Dendritic cell treated with granulocyte-macrophage colony-stimulating factor and Interleukin-4, amounts not matched to agents 40 ng/mL and 50 ng/mL, for 4 days (primary cell): ENCODE measurements at regions of chr13 and their contacts with region 1.

Region 1: DNA sequence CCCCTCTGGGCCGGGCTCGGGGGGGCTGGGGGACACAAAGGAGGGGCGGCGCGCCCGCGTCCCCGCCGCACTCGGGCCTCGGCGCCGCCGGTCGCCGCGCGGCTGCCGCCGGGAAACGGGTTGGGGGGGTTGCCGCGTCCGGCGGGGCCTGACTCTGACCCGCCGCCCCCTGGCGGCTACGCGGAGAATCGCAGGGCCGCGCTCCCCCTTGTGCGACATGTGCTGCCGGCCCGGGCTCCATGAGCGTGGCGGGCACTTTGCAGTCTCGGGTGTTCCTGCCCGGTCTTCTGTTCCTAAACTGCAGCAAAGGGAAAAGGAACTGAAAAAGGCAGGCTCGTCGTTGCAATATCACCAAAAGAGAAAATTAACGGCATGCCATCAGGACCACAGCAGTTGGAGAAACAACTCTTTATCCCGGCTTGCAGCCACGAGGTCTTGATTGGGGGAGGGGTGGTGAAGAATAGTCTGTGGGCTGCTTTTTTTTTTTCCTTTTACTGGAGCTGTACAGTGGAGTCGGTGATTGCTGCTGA is 1.5 kb downstream of the MIR17HG start:
- H3K4me3 Mint-ChIP-seq: peak overlapping the region; percentile 74
- H3K27ac Mint-ChIP-seq: peak overlapping the region; percentile 77
- H3K4me1 Mint-ChIP-seq: peaks cover 20% of the 10 kb centered on the region
- H3K27me3 Mint-ChIP-seq: peaks cover 5% of the 10 kb centered on the region

Region 2: DNA sequence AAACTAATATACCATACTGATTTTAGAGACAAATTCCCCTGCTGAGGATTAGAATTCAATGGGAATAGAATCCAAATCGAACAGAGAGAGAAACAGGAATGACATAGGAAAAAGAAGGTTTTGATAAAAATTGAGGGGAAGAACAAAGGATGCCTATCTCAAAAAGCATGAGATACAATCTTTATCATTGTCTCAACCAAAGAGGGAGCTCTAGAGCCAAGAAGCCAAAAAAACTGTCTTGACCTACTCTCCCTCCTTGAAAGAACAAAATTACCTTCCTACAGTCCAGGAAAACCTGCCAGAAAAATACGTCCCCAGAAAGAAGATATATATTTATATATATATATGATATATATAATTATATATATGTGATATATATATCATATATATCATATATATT is 40.7 kb before region 1 on chr13:
- intact Hi-C with region 1: no loop called
- H3K4me3 Mint-ChIP-seq: no peak overlapping the region
- H3K27ac Mint-ChIP-seq: no peak overlapping the region
- H3K4me1 Mint-ChIP-seq: no peaks in the 10 kb centered on the region
- H3K27me3 Mint-ChIP-seq: peaks cover 4% of the 10 kb centered on the region

Region 3: DNA sequence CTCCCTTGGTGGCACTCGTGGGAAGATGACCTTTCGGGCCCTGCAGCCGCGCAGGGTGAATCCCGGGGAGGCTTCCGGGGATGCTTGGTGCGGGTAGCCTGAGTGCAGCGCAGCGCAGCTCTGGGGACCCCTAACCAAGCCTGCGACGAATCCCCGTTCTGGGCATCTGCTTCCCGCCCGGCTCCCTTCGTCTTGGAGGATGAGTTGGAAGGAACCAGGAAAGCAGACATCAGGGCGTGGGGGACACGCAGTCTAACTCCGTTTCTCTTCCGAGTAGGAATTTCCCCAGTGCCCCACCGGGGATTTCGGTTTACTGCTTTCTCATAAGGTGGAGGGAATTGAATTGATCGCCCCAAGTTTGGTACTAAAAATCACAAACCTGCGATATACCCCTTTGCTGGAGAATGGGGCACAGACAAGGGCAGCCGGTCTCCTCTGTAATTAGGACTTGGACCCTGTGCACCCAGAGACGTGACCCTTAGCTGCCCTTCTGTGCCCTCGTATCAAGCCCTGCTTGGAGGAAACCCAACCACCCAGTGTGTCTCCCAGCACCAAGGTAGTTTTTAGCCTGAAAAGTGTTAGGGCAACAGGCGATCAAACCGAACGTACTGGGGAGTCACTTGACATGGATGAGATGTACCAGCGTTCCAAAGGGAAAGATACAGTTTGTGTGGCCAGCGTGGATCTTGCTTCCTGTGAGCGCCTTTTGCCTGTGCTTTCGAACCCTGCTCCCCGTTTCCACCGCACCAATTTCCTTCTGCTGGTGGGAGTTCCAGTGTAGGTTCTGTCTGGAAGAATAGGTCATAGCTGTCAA is 50.5 kb after region 1 on chr13:
- intact Hi-C with region 1: loop called (anchors 2 kb)
- H3K4me3 Mint-ChIP-seq: peak overlapping the region; percentile 74
- H3K27ac Mint-ChIP-seq: no peak overlapping the region
- H3K4me1 Mint-ChIP-seq: peaks cover 20% of the 10 kb centered on the region
- H3K27me3 Mint-ChIP-seq: peaks cover 58% of the 10 kb centered on the region